Adrenal gland (tissue), 19 donors: ENCODE measurements at regions of chr2 and their contacts with region 1.

Region 1: DNA sequence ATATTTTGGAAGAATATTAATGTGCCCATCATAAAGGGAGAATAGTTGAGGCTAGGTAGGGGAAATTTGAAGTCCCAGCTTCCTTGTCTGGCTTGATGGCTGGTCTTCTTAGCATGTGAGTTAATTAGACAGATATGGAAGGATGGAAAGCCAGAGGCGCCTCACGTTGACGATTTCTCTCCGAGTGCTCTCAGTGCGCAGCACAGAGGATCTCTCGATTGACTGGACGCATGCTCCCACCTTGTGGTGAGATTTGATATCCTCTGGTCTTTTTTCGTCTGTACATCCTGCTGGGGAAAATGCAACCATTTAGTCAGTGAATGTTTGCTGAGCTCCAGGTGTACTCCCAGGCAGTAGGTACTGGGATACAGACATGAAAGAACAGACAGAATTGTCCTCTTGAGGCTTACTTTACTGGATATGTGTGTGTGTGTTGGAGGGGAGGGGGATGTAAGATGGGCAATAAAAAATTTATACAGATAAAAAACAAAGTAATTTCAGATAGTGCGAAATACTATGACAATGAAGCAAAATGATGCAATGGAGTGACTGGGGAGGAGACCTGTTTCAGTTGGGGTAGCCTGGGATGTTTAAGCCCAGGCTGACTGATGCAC is 66.9 kb upstream of the ZNG1B start:
- DNase-seq: peak; percentile 67 to 92 (median 82)
- H3K4me3 ChIP-seq: no peak overlapping the region
- H3K27ac ChIP-seq: no peak overlapping the region
- H3K4me1 ChIP-seq: no peaks in the 10 kb centered on the region
- H3K27me3 ChIP-seq: no peaks in the 10 kb centered on the region
- CTCF ChIP-seq: peak; percentile 48 to 94 (median 86)
- POLR2A ChIP-seq: no peak

Region 2: DNA sequence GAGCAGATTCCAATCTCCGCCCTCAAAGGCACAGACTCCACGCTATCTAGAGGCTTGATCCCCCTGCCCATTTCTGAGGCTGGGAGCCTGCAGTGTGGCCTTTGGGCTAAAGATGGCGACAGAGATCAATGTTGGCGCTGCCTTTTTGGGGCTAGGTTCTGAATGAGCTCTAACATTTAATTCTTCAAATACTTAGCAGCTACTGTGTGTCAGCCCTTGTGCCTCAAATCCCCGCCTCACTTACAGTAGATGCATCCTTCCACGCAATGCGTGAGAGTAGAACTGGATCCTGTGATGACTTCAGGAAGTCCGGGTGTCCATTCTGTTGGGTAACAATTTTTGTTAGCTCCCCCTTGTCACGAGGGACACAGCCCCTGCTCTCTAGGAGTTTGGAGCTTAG is 290.5 kb before region 1 on chr2:
- intact Hi-C with region 1: loop called in 1 of 2 experiments (anchors 10 kb)
- DNase-seq: peak; percentile 35 to 65 (median 51)
- H3K4me3 ChIP-seq: no peak overlapping the region
- H3K27ac ChIP-seq: no peak overlapping the region
- H3K4me1 ChIP-seq: no peaks in the 10 kb centered on the region
- H3K27me3 ChIP-seq: no peaks in the 10 kb centered on the region
- CTCF ChIP-seq: peak; percentile 46 to 72 (median 66)
- POLR2A ChIP-seq: no peak

Region 3: GRCh38 chr2:113138428-113139322 is 231.9 kb before region 1 on chr2:
- intact Hi-C with region 1: loop called in 1 of 2 experiments (anchors 5 kb)
- DNase-seq: peak; percentile 48 to 79 (median 71)
- H3K4me3 ChIP-seq: no peak overlapping the region
- H3K27ac ChIP-seq: peak overlapping the region in 2 of 5 donors; percentile 26 to 71
- H3K4me1 ChIP-seq: peaks cover 0 to 11% of the 10 kb centered on the region in 2 donors
- H3K27me3 ChIP-seq: no peaks in the 10 kb centered on the region
- CTCF ChIP-seq: peak; percentile 75 to 89 (median 82)
- POLR2A ChIP-seq: no peak

Region 4: DNA sequence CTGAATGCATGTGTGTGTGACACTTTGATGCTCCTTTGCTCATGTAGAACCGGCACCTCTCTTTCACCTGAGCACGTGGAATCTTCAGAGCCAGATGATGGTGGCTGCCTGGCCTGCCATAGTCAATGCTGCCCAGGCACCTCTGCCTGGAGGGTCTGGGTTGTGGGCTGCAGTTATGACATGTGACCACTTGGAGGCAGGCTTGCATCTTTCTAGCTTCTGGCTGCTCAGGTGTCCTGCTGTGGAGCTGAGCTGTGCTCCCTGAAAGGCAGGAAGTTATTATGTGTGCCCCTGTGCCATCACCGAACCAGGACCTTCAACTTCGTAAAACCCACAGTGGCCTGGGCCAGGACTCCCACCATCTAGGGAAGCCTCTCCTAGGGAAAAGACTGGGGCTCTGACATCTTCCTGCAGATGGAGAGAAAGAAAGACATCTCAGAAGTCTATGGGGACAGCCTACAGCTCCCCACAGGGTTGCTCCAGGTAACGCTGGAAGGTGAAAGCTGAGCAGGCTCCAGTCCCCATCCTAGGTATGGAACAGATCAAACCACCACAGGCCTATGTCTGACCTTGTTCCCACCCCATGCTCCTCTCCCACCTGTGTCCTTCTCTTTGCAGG is 166.6 kb before region 1 on chr2:
- intact Hi-C with region 1: loop called (anchors 2 to 5 kb)
- DNase-seq: peak; percentile 76 to 92 (median 85)
- H3K4me3 ChIP-seq: no peak overlapping the region
- H3K27ac ChIP-seq: peak overlapping the region in 3 of 5 donors; percentile 43 to 58 (median 51)
- H3K4me1 ChIP-seq: peaks cover 13 to 20% of the 10 kb centered on the region in 2 donors
- H3K27me3 ChIP-seq: no peaks in the 10 kb centered on the region
- CTCF ChIP-seq: peak; percentile 78 to 96 (median 90)
- POLR2A ChIP-seq: peak in 1 of 2 donors; percentile 12

Region 5: GRCh38 chr2:113248997-113249770 is 121.4 kb before region 1 on chr2:
- intact Hi-C with region 1: loop called (anchors 2 to 5 kb)
- DNase-seq: peak; percentile 79 to 93 (median 86)
- H3K4me3 ChIP-seq: no peak overlapping the region
- H3K27ac ChIP-seq: no peak overlapping the region
- H3K4me1 ChIP-seq: peaks cover 0 to 4% of the 10 kb centered on the region in 2 donors
- H3K27me3 ChIP-seq: no peaks in the 10 kb centered on the region
- CTCF ChIP-seq: peak; percentile 82 to 97 (median 92)
- POLR2A ChIP-seq: no peak

Region 6: GRCh38 chr2:113894156-113894743 is 523.7 kb after region 1 on chr2:
- intact Hi-C with region 1: no loop called
- DNase-seq: no peak
- H3K4me3 ChIP-seq: no peak overlapping the region
- H3K27ac ChIP-seq: peak overlapping the region in 2 of 5 donors; percentile 21 to 59
- H3K4me1 ChIP-seq: peaks cover 65 to 80% of the 10 kb centered on the region in 2 donors
- H3K27me3 ChIP-seq: no peaks in the 10 kb centered on the region
- CTCF ChIP-seq: no peak
- POLR2A ChIP-seq: peak in 1 of 2 donors; percentile 36